IMR-90 (cell line): ENCODE measurements at regions of chr12 and their contacts with region 1.

Region 1: GRCh38 chr12:45102818-45103217 is 51.9 kb upstream of the DBX2 start:
- DNase-seq: no peak
- ATAC-seq: no peak
- H3K4me3 ChIP-seq: no peak overlapping the region
- H3K27ac ChIP-seq: no peak overlapping the region
- H3K4me1 ChIP-seq: no peaks in the 10 kb centered on the region
- H3K27me3 ChIP-seq: no peaks in the 10 kb centered on the region
- CTCF ChIP-seq: no peak
- POLR2A ChIP-seq: no peak
- RAD21 ChIP-seq: no peak

Region 2: DNA sequence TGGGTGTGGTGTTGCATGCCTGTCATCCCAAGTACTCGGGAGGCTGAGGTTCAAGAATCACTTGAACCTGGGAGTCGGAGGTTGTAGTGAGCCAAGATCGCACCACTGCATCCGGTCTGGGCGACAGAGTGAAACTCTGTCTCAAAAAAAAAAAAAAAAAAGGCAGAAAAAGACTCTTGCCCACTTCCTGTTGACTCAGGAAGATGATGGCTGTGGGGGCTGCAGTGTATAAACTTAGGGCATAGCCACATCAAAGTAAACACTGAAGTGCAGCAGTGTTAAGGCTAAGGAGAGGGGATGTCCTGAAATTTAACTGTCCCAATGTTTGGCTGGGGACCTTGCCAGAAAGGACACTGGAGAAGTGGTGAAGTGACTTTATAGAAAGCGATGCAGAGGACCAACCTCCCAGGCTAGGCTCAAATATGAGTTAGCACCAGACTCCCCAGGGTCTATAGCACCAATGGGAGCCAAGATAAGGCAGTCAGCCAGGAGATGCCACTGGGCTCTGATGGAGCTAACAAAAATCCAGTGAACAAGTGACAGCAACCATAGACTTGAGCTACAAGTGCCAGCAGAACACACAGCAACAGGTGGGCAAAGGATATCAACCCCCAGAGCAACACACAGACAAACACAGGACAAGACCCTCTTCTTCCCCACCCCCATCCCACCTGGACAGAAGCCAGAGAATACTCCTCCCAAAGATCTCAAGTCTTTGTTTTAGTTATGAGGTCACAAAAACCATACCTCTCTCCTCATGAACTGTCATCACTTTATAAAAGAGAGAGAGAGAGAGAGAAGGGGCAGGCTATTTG is 254.7 kb before region 1 on chr12:
- CTCF ChIA-PET with region 1: no interaction called
- POLR2A ChIA-PET with region 1: no interaction called
- dilution Hi-C with region 1: no loop called
- in situ Hi-C with region 1: no loop called
- intact Hi-C with region 1: no loop called
- DNase-seq: no peak
- ATAC-seq: no peak
- H3K4me3 ChIP-seq: no peak overlapping the region
- H3K27ac ChIP-seq: no peak overlapping the region
- H3K4me1 ChIP-seq: no peaks in the 10 kb centered on the region
- H3K27me3 ChIP-seq: no peaks in the 10 kb centered on the region
- CTCF ChIP-seq: no peak
- POLR2A ChIP-seq: no peak
- RAD21 ChIP-seq: no peak

Region 3: DNA sequence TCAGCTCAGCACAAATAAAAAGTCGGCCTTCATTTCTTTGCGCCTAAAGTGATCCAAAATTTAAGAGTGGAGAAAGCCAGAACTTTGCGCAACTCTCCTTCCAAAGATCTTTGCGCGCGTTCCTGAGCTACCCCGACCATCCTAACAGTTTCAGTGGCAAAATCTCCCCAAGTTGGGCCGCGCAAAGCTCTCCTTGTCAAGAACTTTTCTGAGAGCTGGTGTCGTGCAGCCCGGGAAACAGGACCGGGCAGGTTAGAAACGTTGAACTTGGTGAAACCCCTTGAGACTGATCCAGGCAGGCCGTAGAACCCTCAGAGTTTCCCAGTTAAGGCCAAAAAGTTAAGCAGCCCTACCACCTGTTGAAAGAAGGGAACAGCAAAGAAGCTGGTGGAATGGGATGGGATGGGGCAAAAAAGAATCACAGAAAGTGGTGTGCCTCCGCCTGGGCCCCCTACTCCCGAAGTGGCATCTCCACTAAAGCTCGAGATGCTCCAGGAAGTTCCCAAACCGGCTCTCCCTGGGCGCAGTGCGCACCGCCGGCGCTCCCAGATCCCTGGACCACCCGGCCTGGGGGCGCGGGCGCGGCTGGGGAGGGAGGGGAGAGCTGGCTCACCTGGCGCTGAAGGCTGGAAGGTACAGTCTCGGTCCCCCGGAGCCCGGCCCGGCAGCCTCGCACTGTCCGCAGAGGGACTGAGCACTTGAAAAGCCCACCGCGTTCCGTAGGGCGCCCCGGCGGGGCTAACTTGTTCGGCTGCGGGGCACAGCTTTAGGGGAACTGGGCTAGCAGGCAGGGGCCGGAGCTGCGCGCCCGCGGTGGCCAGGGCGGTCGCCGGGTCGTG is 52.7 kb before region 1 on chr12:
- CTCF ChIA-PET with region 1: no interaction called
- POLR2A ChIA-PET with region 1: no interaction called
- dilution Hi-C with region 1: no loop called
- in situ Hi-C with region 1: no loop called
- intact Hi-C with region 1: loop called (anchors 10 kb)
- DNase-seq: no peak
- ATAC-seq: no peak
- H3K4me3 ChIP-seq: no peak overlapping the region
- H3K27ac ChIP-seq: no peak overlapping the region
- H3K4me1 ChIP-seq: no peaks in the 10 kb centered on the region; the same call in 1 of the 2 replicates
- H3K27me3 ChIP-seq: peaks cover 20% of the 10 kb centered on the region
- CTCF ChIP-seq: no peak
- POLR2A ChIP-seq: no peak
- RAD21 ChIP-seq: no peak